Transverse colon (tissue), 4 donors: ENCODE measurements at regions of chr3 and their contacts with region 1.

Region 1: GRCh38 chr3:46500656-46501635 is 3.2 kb downstream of the RTP3 start:
- DNase-seq: no peak
- H3K4me3 ChIP-seq: no peak overlapping the region
- H3K27ac ChIP-seq: no peak overlapping the region
- H3K4me1 ChIP-seq: no peaks in the 10 kb centered on the region
- H3K27me3 ChIP-seq: no peaks in the 10 kb centered on the region
- CTCF ChIP-seq: no peak
- EP300 ChIP-seq: no peak
- POLR2A ChIP-seq: no peak

Region 2: DNA sequence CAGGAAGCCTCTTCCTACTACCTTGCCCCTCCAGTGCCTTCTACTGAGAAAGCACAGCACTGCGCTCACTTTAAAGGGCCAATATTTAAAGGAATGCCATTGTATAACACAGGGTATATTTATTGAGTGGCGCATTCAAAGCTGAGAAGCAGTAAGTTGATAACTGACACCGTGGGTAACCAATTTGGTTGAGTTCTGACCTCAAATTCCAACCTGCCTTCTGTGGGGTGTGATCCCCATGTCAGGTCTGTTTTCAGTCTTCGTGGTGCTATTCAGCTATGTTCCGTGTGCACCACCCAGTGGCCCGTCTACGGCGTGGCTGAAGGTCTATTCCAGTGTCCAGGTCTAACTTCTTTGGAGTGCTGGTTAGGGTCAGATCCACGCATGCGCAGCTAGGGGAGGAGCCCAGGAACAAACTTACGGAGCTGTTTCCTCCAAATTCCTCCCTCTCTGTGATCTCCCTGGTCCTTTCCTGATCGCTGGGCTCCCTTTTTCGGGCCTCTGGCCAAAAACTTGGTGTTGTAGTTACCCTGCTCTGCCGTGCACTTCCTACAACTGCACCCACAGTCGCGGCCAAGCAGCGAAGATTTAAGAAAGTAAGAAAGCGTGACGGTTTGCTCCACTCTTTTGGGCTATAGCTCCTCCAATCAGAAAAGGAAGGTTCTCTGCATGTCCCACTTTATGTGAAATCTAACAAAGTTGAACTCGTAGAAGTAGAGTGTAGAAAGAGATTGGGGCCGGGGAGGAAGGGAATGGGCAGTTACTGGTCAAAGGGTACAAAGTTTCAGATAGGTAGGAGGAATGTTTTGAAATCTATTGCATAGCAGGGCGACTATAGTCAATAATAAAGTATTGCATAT is 57.5 kb after region 1 on chr3:
- in situ Hi-C with region 1: loop called in 1 of 4 experiments (anchors 10 kb)
- intact Hi-C with region 1: no loop called
- DNase-seq: peak; percentile 83
- H3K4me3 ChIP-seq: peak overlapping the region in 3 of 4 donors; percentile 37 to 46 (median 40)
- H3K27ac ChIP-seq: peak overlapping the region; percentile 28 to 80 (median 70)
- H3K4me1 ChIP-seq: peaks cover 0 to 12% (median 4%) of the 10 kb centered on the region in 4 donors
- H3K27me3 ChIP-seq: no peaks in the 10 kb centered on the region
- CTCF ChIP-seq: peak; percentile 33 to 74 (median 54)
- EP300 ChIP-seq: no peak
- POLR2A ChIP-seq: no peak

Region 3: DNA sequence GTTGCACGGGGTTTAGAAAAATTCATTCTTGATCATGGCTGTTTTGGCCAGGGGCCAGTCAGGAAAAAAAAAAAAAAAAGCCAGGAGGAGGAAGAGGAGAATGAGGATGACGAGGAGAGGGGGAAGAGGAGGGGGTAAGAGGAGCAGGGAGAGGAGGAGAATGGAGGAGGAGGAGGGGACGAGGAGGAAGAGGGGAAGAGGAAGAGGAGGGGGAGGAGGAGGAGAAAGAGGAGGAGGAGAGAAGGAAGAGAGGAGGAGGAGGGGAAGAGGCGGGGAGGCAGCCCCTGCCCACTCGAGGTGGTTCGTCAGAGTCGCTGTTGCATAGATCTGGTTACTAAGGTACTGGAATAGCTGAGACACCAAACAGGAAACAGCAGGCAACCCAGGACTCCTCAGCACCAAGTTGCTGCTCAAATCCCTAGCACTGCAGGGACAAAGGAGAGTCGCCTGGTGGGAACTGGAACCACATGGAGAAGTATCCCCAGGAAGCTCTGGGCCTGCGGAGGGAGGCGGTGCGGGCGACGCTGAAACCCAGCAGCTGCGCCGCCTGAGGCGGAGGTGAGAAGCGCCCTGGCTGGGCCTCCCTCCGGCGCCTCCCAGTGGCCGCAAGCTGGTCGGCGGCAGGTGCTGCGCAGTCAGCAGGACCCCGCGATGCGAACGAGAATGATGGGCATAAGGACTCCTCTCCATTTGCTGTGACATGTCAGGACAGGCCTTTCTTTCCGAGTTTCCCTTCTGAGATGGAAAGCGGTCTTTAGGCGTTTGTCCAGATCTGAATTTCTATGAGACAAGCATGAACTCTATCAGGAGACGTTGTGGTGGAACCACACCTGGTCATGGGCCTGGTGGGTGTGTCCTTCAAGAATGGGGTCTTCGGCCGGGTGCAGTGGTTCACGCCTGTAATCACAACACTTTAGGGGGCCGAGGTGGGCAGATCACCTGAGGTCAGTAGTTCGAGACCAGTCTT is 128.9 kb after region 1 on chr3:
- in situ Hi-C with region 1: loop called in 1 of 4 experiments (anchors 10 kb)
- intact Hi-C with region 1: no loop called
- DNase-seq: peak; percentile 84
- H3K4me3 ChIP-seq: peak overlapping the region in 2 of 4 donors; percentile 12 to 28
- H3K27ac ChIP-seq: peak overlapping the region; percentile 61 to 78 (median 72)
- H3K4me1 ChIP-seq: peaks cover 7 to 50% (median 19%) of the 10 kb centered on the region in 4 donors
- H3K27me3 ChIP-seq: no peaks in the 10 kb centered on the region
- CTCF ChIP-seq: peak; percentile 96 to 99 (median 97)
- EP300 ChIP-seq: no peak
- POLR2A ChIP-seq: no peak